ENCODE measurements at regions of chr10 and their contacts with region 1.

Region 1: DNA sequence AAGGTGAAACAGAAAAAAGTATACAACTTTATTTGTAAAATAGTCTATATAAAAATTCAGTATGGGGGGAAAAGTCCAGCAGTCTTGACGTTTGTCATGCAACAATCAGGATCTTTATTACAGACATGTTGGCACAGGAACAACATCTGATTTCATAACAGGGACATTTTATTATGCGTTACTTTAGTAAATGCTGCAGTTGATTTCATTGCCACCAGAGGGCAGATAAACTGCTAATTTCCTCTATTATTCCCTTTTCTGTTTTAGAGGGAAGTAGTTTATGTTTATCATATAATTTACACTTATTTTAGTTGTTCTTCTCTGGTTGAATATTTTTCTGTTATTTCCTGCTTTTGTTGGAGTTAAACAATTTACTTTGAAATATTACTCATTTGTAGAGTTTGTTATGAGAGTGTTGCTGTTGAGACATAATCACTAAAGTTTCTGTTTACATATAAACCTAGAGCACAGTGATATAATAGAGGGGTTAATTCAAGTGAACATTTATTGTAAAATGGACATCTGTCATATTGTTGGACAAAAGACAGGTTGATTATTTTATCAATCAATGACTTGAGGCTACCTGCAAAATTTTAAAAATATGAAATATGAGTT is 3.3 kb downstream of the PLXDC2 start:
- DNase-seq: peak; percentile 15 to 29
- H3K4me3 ChIP-seq: peak overlapping the region in 1 of 3 donors; percentile 8
- H3K27ac ChIP-seq: peak overlapping the region in 2 of 3 donors; percentile 5 to 38
- H3K4me1 ChIP-seq: peaks cover 5 to 7% of the 10 kb centered on the region in 2 donors
- H3K27me3 ChIP-seq: no peaks in the 10 kb centered on the region
- CTCF ChIP-seq: peak; percentile 39 to 80 (median 72)
- POLR2A ChIP-seq: no peak

Region 2: GRCh38 chr10:19616966-19617365 is 202.6 kb before region 1 on chr10:
- intact Hi-C with region 1: no loop called
- DNase-seq: no peak
- H3K4me3 ChIP-seq: no peak overlapping the region
- H3K27ac ChIP-seq: no peak overlapping the region
- H3K4me1 ChIP-seq: no peaks in the 10 kb centered on the region
- H3K27me3 ChIP-seq: no peaks in the 10 kb centered on the region
- CTCF ChIP-seq: no peak
- POLR2A ChIP-seq: no peak

Region 3: GRCh38 chr10:19930936-19931893 is 111.7 kb after region 1 on chr10:
- intact Hi-C with region 1: loop called (anchors 10 kb)
- DNase-seq: peak; percentile 73 to 86
- H3K4me3 ChIP-seq: no peak overlapping the region
- H3K27ac ChIP-seq: peak overlapping the region; percentile 56 to 71 (median 58)
- H3K4me1 ChIP-seq: peaks cover 17 to 18% of the 10 kb centered on the region in 2 donors
- H3K27me3 ChIP-seq: no peaks in the 10 kb centered on the region
- CTCF ChIP-seq: no peak
- POLR2A ChIP-seq: no peak